Heart right ventricle (tissue), 16 donors: ENCODE measurements at regions of chr6 and their contacts with region 1.

Region 1: DNA sequence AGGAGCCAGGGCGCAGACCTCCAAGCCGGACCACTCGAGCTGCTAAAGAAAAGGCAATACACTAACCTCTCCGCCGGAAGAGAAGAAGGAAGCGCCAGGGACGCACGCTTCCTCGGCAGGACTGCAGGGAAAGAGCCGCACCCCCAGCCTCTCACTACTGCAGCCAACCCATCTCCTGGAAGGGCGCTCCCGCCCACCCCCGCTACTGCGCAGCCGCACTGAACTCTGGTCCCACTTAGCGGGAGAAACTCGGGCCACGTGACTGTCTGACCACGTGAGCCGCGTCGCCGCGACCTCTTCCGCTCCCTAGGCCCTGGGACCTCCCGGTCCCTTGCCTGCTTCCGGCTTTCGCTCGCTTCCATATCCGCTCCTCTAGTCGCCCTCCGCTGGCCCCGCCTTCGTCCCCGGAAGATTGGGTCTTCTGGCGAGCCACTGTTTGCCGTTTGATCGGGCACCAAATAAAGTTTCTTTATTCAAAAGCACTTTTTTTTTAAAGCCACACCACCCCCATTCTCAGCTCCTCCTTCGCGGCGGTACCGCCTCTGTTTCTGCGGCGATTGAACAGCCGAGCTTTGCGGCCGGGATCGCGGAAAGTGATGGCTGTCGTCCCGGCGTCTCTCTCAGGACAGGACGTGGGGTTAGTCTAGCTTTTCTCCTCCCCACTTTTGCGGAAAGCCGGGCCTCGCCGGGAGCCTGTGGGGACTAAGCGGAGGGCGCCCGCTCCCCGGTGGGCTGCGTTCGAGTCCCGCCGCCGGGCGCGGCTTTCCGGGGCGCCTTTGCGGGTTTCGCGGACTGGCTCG is at the start of gene RMND1:
- DNase-seq: peak; percentile 100
- ATAC-seq: peak; percentile 99 to 100 (median 99)
- H3K4me3 ChIP-seq: peak within 1 kb of the TSS; percentile 69 to 97 (median 84)
- H3K27ac ChIP-seq: peak within 1 kb of the TSS; percentile 83 to 97 (median 94)
- H3K4me1 ChIP-seq: peaks cover 0 to 30% (median 25%) of the 10 kb centered on the region in 9 donors
- H3K27me3 ChIP-seq: no peaks in the 10 kb centered on the region
- CTCF ChIP-seq: no peak
- total RNA-seq, gene RMND1: 10.9 to 17.6 (median 14.7) TPM

Region 2: DNA sequence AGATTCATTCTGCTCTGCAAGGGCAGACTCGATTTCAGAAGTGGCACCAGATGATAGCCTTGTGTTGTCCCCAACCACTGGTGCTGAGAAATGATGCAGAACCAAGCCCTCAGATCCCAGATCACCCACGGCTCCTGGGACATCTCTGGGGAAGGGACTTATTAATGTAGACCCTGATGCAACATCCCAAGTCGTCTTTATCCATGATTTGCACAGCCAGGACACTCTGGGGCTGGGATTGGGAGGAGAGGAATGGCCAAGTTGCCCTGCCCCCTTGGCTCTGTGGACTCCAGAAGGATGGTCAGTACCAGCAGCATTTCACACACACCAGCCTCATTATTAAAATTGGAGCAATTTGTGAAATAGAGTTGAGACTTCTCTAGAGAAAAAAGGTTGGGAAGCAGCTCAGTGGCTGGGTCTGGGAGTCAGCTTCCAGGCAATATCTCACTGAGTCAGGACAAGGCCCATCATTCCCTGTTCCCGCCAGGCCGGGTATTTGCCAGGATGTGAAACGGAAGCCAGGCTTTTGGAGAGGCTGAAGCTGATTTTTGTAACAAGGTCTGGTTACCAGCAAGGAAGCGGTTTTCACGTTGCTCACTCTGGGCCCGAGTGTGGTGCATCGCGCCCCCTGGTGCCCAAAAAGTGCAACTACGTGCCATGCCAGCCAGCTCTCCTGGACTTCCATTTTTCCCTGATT is 128.2 kb before region 1 on chr6:
- intact Hi-C with region 1: no loop called
- DNase-seq: peak; percentile 81 to 83
- ATAC-seq: peak; percentile 87 to 95 (median 90)
- H3K4me3 ChIP-seq: peak overlapping the region in 3 of 10 donors; percentile 5 to 58 (median 12)
- H3K27ac ChIP-seq: peak overlapping the region in 8 of 10 donors; percentile 33 to 76 (median 56)
- H3K4me1 ChIP-seq: peaks cover 0 to 30% (median 27%) of the 10 kb centered on the region in 9 donors
- H3K27me3 ChIP-seq: peaks cover 0 to 24% (median 6%) of the 10 kb centered on the region in 7 donors
- CTCF ChIP-seq: peak; percentile 97 to 99 (median 98)

Region 3: DNA sequence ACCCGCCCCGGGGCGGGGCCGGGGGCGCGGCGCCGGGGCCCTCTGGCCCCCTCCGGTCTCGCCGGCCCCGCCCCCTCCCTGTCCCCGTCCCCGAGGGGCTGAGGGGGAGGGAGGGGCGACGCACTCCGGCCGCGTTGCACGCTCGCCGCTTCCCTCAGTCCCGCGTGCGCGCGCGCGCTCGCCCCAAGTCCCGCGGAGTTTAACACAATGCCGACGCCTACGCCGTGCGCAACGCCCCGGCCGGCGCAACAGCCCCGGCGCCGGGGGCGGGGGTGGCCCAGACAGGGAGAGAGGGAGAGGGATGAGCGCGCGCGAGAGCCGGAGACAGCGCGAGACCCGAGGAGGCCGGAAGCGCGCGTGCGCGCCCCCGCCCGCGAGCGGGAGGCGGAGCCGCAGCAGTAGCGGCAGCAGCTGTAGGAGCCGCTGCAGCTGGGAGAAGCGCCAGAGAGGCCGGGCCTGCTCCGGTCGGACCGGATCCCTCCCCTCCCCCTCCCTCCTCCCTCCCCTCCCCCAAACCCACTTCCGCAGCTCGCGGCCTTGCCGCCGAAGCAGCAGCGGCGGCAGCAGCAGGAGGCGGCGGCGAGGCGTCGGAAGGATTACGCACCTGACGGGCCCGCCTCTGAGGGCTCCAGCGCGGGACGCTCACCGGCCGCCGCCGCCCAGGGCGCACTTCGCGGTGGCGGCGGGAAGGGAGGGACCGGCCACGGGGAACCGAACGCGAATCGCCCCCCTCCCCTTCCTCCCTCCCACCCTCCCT is 61.7 kb before region 1 on chr6:
- intact Hi-C with region 1: loop called in 5 of 10 experiments (anchors 2 to 5 kb)
- DNase-seq: peak; percentile 97 to 98
- ATAC-seq: peak; percentile 91 to 98 (median 92)
- H3K4me3 ChIP-seq: peak overlapping the region; percentile 81 to 100 (median 96)
- H3K27ac ChIP-seq: peak overlapping the region; percentile 94 to 100 (median 100)
- H3K4me1 ChIP-seq: peaks cover 12 to 61% (median 52%) of the 10 kb centered on the region in 9 donors
- H3K27me3 ChIP-seq: no peaks in the 10 kb centered on the region
- CTCF ChIP-seq: peak in 2 of 9 donors; percentile 14 to 21

Region 4: DNA sequence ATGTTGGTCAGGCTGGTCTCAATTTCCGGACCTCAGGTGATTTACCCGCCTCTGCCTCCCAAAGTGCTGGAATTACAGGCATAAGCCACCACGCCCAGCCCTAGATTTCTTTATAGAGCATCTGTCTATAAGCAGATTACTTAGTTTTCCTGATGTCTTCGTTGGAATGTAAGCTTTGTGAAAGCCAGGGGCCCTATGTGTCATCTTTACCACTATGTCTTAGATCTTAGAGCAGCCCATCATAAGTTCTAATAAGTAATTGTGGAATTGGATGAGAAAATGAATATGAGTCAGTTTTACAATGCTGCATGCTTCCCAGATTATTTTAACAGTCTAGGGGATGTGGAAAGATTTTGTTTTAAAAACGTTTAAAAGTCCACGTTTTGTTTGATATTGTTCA is 51.7 kb before region 1 on chr6:
- intact Hi-C with region 1: no loop called
- DNase-seq: no peak
- ATAC-seq: no peak
- H3K4me3 ChIP-seq: no peak overlapping the region
- H3K27ac ChIP-seq: no peak overlapping the region
- H3K4me1 ChIP-seq: peaks cover 0 to 54% (median 31%) of the 10 kb centered on the region in 9 donors
- H3K27me3 ChIP-seq: no peaks in the 10 kb centered on the region
- CTCF ChIP-seq: no peak